ENCODE measurements at regions of chr3 and their contacts with region 1.

Region 1: DNA sequence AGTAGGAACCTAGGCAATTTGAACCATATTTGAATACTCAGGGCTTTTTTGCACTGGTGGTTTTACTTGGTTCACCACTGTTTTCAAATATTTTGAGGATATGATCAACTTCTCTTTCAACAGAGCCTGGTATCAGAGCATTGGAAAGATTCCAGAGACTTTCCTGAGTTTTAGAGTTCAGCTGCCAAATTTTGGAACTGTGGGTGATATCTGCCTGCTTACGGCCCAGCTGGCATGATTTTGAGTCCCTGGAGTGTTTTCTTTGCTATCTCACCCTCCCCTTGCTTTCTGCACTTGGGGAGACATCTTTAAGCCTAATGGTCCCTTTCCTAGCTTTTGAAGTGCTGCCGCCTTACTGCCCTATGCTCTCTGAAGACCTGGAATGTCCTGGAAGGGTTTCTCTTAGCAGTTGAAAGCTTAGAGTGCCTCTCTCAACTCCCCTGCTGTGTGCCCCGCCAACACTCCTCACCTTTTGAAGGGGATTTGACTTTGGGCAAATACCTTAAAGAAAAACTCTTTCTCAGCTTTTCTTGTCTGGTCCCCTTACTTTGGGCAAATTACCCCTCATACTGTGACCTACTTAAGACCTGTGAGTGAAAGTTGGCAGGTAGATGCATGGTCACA is 539.1 kb downstream of the MFSD1 start:
- DNase-seq: no peak
- H3K4me3 ChIP-seq: no peak overlapping the region
- H3K27ac ChIP-seq: no peak overlapping the region
- H3K4me1 ChIP-seq: no peaks in the 10 kb centered on the region
- H3K27me3 ChIP-seq: no peaks in the 10 kb centered on the region
- CTCF ChIP-seq: no peak
- POLR2A ChIP-seq: no peak

Region 2: DNA sequence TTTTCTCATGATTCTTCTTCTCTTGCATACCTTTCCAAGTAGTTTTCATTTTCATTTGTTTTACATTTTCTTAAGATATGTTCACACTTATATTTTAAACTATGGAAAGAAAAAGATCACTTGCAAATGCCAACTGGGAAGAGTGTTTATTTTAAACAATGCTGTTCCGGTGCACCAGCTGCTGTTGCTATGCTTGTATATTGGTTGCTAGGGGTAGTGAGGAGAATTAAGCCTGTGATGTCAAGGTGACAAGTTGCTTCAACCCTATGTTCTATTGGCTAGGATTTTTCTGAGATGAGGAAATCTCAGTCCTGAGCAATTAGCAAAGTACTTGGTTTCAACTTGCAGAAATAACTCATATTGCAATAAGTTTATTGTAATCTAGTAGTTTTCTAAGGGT is 39.0 kb before region 1 on chr3:
- CTCF ChIA-PET with region 1: no interaction called
- POLR2A ChIA-PET with region 1: no interaction called
- dilution Hi-C with region 1: no loop called
- intact Hi-C with region 1: no loop called
- DNase-seq: no peak
- H3K4me3 ChIP-seq: no peak overlapping the region
- H3K27ac ChIP-seq: no peak overlapping the region
- H3K4me1 ChIP-seq: no peaks in the 10 kb centered on the region
- H3K27me3 ChIP-seq: peaks cover 5% of the 10 kb centered on the region in 2 experiments
- CTCF ChIP-seq: no peak
- POLR2A ChIP-seq: no peak

Region 3: DNA sequence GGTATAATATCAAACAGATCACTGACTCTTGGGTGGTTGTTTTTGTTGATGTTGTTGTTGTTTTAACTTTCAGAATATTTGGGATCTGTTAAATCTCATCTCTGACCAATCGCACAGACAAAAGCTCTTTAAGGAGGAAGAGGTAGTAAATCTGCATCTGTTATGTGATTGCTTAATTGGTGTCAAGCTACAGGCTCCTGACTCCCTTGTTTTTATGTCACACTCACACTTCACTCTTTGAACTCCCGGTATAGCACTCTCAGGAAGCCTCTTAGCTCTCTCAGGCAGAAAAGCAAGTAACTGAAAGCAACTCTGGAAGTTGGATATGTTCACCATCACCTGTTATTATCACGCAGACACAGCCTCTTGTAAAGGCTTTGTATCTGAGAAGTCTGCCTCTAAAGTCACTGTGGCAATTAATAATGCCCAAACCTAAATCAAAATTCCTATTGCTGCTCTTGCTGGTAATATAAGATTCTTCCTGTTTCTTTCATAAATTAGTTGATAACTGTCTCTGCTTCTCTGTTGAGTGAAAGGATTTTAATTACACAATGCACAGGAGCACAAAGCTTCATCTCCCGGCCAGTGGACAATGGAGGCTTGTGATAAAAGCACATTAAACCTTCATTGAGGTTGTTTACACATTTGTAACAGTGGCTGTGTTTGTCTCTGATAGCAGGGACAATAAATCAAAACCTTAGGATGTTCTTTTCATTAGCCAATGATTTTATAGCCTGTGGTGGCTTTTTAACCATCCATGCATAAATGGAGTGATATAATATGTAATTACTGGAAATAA is 37.6 kb after region 1 on chr3:
- CTCF ChIA-PET with region 1: no interaction called
- POLR2A ChIA-PET with region 1: no interaction called
- dilution Hi-C with region 1: loop called (anchors 5 kb)
- intact Hi-C with region 1: no loop called
- DNase-seq: no peak
- H3K4me3 ChIP-seq: no peak overlapping the region
- H3K27ac ChIP-seq: no peak overlapping the region
- H3K4me1 ChIP-seq: no peaks in the 10 kb centered on the region
- H3K27me3 ChIP-seq: no peaks in the 10 kb centered on the region
- CTCF ChIP-seq: no peak
- POLR2A ChIP-seq: no peak

Region 4: GRCh38 chr3:159486586-159486985 is 145.6 kb after region 1 on chr3:
- CTCF ChIA-PET with region 1: no interaction called
- POLR2A ChIA-PET with region 1: no interaction called
- dilution Hi-C with region 1: no loop called
- intact Hi-C with region 1: no loop called
- DNase-seq: peak; percentile 9
- H3K4me3 ChIP-seq: no peak overlapping the region
- H3K27ac ChIP-seq: no peak overlapping the region
- H3K4me1 ChIP-seq: no peaks in the 10 kb centered on the region
- H3K27me3 ChIP-seq: peaks cover 0 to 3% of the 10 kb centered on the region in 2 experiments
- CTCF ChIP-seq: peak; percentile 9 to 13
- POLR2A ChIP-seq: no peak

Measured in endothelial cell of umbilical vein (primary cell).